ENCODE measurements at regions of chr5 and their contacts with region 1.

Region 1: GRCh38 chr5:159156426-159157238 is 52.7 kb downstream of the RNF145 start:
- DNase-seq: peak; percentile 66
- H3K4me3 ChIP-seq: no peak overlapping the region
- H3K27ac ChIP-seq: no peak overlapping the region
- H3K4me1 ChIP-seq: peaks cover 19% of the 10 kb centered on the region
- H3K27me3 ChIP-seq: no peaks in the 10 kb centered on the region
- CTCF ChIP-seq: peak; percentile 76

Region 2: DNA sequence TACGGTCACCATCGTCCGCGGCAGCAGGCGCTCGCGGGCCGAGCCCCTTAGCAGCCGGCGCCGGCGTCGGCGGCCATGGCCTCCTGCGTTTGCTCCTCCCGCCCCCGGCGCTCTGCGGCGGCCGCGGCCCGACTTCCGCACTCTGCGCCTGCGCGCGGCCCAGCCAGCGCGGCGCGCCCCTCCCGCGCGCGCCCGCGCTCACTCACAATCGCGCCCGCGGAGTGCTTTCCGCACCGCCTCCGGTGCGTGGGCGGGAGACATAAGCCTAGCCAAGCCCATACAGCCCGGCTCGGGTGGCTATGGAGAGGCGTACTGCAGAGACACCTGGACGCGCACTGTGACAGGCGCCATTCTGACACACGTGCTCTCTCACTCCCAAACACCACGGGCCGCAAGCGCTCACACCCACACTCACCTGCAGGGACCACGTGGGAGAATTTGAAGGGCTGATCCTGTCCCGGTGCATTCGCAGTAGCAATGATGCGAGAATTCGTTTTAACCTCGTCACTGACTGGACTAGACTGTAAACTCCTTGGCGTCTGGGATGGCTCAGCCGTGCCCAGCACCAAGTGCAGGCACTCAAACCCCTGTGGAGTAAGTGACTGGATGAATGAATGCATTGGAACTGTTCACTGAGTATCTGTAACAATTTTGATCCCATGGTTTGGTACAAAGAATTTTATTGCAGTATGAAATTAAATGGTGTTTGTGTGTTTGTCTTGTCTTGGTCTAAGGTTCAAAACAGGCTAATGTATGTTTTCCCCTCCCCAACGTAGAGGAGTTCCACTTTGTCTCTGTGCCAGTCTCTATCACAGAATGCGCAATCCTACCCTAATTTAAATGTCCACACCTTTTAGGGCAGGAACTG is 53.0 kb after region 1 on chr5 and contains the start of gene RNF145:
- CTCF ChIA-PET with region 1: no interaction called
- POLR2A ChIA-PET with region 1: no interaction called
- intact Hi-C with region 1: loop called (anchors 5 kb)
- DNase-seq: peak; percentile 92
- H3K4me3 ChIP-seq: peak within 1 kb of the TSS; percentile 75
- H3K27ac ChIP-seq: peak within 1 kb of the TSS; percentile 96
- H3K4me1 ChIP-seq: peaks cover 60% of the 10 kb centered on the region
- H3K27me3 ChIP-seq: no peaks in the 10 kb centered on the region
- CTCF ChIP-seq: no peak
- total RNA-seq, gene RNF145: 103 and 132 TPM in 2 replicates

Region 3: GRCh38 chr5:159262859-159263567 is 106.4 kb after region 1 on chr5 and contains the start of gene UBLCP1:
- CTCF ChIA-PET with region 1: no interaction called
- POLR2A ChIA-PET with region 1: no interaction called
- intact Hi-C with region 1: loop called (anchors 2 kb)
- DNase-seq: peak; percentile 85
- H3K4me3 ChIP-seq: peak within 1 kb of the TSS; percentile 89
- H3K27ac ChIP-seq: peak within 1 kb of the TSS; percentile 94
- H3K4me1 ChIP-seq: peaks cover 4% of the 10 kb centered on the region
- H3K27me3 ChIP-seq: no peaks in the 10 kb centered on the region
- CTCF ChIP-seq: no peak
- total RNA-seq, gene UBLCP1: 23.5 and 23.8 TPM in 2 replicates

Region 4: GRCh38 chr5:159316519-159317383 is 160.1 kb after region 1 on chr5:
- CTCF ChIA-PET with region 1: interaction called, 9 read pairs
- POLR2A ChIA-PET with region 1: no interaction called
- intact Hi-C with region 1: loop called (anchors 1 kb)
- DNase-seq: peak; percentile 52
- H3K4me3 ChIP-seq: no peak overlapping the region
- H3K27ac ChIP-seq: no peak overlapping the region
- H3K4me1 ChIP-seq: no peaks in the 10 kb centered on the region
- H3K27me3 ChIP-seq: no peaks in the 10 kb centered on the region
- CTCF ChIP-seq: peak; percentile 70

Region 5: DNA sequence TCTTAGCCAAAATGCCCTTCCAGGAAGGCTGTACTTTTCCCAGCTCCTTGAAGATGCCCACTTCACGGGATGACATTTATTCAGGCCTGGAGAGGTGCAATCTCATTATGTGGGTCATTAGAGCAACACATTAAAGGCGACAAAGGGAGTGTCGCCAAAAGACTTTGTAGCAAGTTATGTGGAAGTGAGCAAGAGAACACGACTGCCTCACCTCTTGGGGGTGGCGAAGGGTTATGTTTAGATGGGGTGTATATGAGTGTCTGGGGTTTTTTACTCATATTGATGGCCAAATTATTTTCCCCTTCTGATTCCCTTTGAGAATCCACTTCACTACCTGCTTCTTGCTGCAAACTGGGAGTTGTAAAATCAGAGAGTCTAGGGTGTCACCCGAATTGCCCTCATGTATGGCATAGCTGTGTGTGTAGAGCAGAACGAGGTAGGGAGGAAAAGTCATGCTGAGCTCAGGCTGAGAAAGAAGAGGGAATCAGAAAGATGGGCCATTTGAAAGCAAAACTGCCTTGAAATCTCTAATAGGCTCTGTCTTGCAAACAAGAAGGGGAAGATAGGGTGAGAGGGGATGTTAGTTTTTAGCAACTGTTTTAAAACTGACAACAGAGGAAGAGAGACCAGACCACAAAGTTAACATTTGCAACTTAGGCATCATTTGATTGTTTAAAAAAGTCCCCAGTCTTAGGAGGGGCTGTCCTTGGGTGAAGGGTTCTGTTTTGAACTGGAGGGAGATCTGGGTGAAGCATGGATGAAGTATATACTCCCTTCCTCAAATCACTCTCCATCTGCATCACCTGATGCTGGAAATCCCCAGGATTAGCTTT is 270.8 kb after region 1 on chr5:
- CTCF ChIA-PET with region 1: no interaction called
- POLR2A ChIA-PET with region 1: no interaction called
- intact Hi-C with region 1: no loop called
- DNase-seq: no peak
- H3K4me3 ChIP-seq: no peak overlapping the region
- H3K27ac ChIP-seq: no peak overlapping the region
- H3K4me1 ChIP-seq: no peaks in the 10 kb centered on the region
- H3K27me3 ChIP-seq: peaks cover 6% of the 10 kb centered on the region
- CTCF ChIP-seq: no peak